Activated CD4-positive, alpha-beta T cell treated with anti-CD3 and anti-CD28 coated beads, Interleukin-2, amount 10 ng/mL, durations not matched to agents 24 days and 14 days (primary cell): ENCODE measurements at regions of chr2 and their contacts with region 1.

Region 1: DNA sequence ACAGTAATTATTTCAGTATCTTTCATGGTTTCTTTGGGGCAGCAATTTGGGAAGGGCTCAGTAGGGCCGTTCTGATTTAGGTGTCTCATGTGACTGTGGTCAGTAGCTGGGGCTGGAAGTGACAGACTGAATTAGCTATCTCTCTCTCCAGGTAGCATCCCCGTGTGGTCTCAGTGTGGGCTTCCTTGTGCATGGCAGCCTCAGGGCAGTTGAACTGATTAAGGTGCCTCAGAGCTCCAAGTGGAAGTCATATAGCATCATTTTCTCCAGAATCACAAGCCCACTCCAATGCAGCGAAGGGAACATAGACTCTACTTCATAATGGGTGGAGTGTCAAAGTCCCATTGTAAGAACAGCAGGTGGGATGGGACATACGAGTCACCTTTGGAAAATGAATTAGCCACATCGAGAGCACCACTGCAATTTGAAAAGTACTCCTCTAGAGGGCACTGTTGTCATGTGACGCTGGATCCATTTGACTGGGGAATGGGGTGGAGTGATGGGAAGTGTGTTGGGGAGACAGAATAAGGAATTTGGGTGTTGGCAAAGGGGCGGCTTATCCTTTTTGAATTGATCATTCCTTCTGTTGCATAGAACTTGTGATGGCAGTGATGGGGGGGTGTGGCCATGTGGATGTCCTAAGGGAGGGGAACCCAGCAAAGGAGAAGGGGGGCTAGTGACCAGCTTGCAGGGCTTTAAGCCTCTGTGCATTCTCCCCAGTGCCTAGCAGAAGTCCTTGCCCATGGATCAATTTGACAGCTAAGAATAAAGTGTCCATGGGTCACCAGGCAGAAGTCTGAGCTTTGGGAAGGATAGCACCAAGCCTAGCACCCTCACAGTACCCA is 39.3 kb upstream of the FAM136A start:
- DNase-seq: peak; percentile 83
- H3K4me3 Mint-ChIP-seq: no peak overlapping the region
- H3K27ac Mint-ChIP-seq: no peak overlapping the region
- H3K4me1 Mint-ChIP-seq: peaks cover 2% of the 10 kb centered on the region
- H3K27me3 Mint-ChIP-seq: peaks cover 21% of the 10 kb centered on the region

Region 2: GRCh38 chr2:70616168-70616694 is 275.1 kb after region 1 on chr2:
- intact Hi-C with region 1: loop called (anchors 1 kb)
- DNase-seq: no peak
- H3K4me3 Mint-ChIP-seq: no peak overlapping the region
- H3K27ac Mint-ChIP-seq: no peak overlapping the region
- H3K4me1 Mint-ChIP-seq: peaks cover 2% of the 10 kb centered on the region
- H3K27me3 Mint-ChIP-seq: peaks cover 17% of the 10 kb centered on the region

Region 3: DNA sequence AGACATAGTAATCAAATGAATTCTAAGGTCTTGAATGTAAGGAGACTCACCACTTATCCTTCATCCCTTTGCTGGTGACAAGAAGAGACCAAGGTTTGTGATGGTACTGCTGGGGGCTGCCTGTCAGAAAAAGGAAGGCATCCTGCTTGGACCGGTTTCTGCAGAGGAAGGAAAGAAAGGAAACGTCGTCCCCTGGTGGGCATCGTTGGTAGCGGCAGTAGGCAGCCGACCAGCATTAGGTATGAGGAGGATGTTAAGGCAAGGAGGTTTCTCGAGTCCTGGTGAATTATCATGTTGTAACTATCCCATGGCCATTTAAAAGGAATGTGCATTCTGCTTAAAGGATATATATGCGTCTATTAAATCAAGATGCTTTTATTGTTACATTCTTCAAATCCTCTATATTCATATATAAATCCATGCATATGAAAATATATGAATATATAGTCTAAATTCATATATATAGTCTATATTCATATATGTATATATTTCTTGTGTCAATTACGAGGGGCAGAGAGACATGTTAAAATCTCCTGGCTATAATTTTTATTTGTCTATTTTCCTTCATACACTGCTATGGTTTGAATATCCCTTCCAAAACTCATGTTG is 306.8 kb after region 1 on chr2:
- intact Hi-C with region 1: loop called (anchors 1 kb)
- DNase-seq: peak; percentile 91
- H3K4me3 Mint-ChIP-seq: no peak overlapping the region
- H3K27ac Mint-ChIP-seq: no peak overlapping the region
- H3K4me1 Mint-ChIP-seq: peaks cover 2% of the 10 kb centered on the region
- H3K27me3 Mint-ChIP-seq: peaks cover 24% of the 10 kb centered on the region